Calu3 (cell line): ENCODE measurements at regions of chr2 and their contacts with region 1.

Region 1: DNA sequence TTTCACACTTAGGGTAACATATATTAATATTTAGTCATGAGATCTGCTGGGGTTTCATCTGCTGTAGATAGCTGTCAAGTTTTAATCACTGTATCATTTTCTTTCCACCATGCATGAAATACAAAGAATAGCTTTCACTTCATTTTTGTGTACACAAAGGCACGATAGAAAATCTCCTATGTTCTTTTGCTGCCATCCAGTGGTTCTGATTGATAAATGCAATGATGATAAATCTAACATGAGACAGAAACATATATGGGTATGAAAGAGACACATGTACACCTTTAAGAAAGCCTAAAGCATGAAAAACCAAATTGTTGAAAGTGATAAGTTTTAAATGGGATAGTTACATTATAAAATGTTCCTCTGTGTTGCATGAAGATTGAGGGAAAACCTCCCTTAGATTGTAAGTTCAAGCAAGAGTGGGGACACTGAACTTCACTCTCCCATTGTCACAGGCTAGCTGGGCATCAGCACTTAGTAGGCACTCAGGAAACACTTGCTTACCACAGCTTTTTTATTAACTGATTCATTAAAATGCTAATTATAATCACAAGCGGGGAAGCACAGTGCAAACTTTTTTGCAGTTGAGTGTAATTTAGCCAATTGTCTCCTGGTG is 31.2 kb downstream of the C1D start:
- DNase-seq: peak; percentile 29
- H3K4me3 Mint-ChIP-seq: no peak overlapping the region
- H3K27ac Mint-ChIP-seq: no peak overlapping the region
- H3K4me1 Mint-ChIP-seq: no peaks in the 10 kb centered on the region
- H3K27me3 Mint-ChIP-seq: no peaks in the 10 kb centered on the region
- CTCF ChIP-seq: peak; percentile 25

Region 2: DNA sequence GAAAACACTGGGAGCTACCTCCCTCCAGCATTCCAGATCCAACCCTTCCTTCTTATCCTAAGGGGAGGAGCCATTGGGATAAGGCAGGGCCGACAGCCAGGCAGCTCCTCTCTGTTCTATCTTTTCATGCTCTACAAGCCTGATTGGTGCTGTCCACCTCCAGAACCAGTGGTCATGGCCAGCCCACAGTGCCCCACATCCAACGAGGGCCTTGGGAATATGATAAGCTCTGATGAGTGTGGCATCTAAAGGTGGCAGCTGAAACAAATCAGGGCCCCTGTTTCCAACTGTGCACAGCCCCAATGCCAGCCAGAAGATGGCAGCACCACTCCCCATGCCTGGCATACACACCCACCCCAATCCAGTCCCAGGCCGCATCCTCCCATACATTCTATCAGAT is 298.1 kb before region 1 on chr2:
- CTCF ChIA-PET with region 1: no interaction called
- intact Hi-C with region 1: loop called (anchors 1 kb)
- DNase-seq: peak; percentile 58
- H3K4me3 Mint-ChIP-seq: no peak overlapping the region
- H3K27ac Mint-ChIP-seq: no peak overlapping the region
- H3K4me1 Mint-ChIP-seq: no peaks in the 10 kb centered on the region
- H3K27me3 Mint-ChIP-seq: no peaks in the 10 kb centered on the region
- CTCF ChIP-seq: no peak

Region 3: DNA sequence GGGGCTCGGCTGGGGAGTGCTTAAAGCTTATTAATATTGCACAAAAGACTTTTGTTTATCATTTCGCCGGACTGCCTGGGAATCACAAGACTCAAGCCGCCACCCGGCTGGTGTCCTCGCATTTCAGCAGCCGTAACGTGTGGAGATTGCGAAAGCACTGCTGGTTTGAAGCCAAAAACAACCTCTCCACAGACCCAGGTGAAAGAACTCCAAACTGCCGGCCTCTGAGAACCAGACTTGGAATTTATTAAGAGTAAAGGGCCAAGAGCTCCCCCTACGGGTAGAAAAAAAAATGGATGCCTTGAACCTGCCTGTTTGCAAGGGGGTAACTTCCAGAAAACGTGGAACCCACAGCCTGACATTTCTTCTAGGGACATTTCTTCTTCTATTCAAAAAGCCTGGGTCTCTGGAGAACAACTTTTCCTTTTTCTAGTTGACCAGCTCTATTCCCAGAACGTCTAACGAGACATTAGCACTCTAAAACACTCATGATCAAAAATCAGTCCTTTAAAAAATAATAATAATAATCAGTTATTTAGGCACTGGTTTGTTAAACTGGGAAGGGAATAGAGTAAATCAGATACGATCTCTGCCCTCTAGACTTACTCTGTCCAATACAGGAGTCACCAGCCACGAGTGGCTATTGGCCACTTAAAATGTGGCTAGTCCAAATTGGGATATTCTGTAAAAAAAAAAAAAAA is 185.1 kb before region 1 on chr2:
- CTCF ChIA-PET with region 1: interaction called, 5 read pairs
- intact Hi-C with region 1: loop called (anchors 5 kb)
- DNase-seq: peak; percentile 88
- H3K4me3 Mint-ChIP-seq: peak overlapping the region; percentile 14
- H3K27ac Mint-ChIP-seq: peak overlapping the region; percentile 39
- H3K4me1 Mint-ChIP-seq: peaks cover 10% of the 10 kb centered on the region
- H3K27me3 Mint-ChIP-seq: no peaks in the 10 kb centered on the region
- CTCF ChIP-seq: peak; percentile 54

Region 4: DNA sequence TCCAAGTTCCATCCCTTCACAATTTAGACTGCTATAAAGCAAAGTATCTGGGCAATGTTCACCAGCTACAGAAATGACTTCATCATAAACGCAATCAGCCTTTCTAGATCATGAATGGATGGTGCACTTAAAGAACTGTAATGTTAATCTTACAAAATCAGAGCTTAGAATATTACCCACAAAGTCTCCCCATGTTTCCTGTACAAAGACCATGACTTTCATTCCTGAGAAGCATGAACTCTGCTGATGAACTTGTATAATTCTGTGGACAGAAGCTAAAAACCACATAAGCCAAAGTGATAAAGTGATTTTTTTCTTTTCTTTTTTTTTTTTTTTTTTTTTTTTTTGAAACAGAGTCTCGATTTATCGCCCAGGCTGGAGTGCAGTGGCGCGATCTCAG is 22.1 kb before region 1 on chr2:
- CTCF ChIA-PET with region 1: no interaction called
- intact Hi-C with region 1: no loop called
- DNase-seq: no peak
- H3K4me3 Mint-ChIP-seq: no peak overlapping the region
- H3K27ac Mint-ChIP-seq: no peak overlapping the region
- H3K4me1 Mint-ChIP-seq: no peaks in the 10 kb centered on the region
- H3K27me3 Mint-ChIP-seq: no peaks in the 10 kb centered on the region
- CTCF ChIP-seq: no peak